Activated naive CD4-positive, alpha-beta T cell treated with anti-CD3 and anti-CD28 coated beads for 36 hours (primary cell): ENCODE measurements at regions of chr7 and their contacts with region 1.

Region 1: GRCh38 chr7:19708397-19709248 is at the start of gene POLR1F:
- DNase-seq: peak; percentile 95
- H3K4me3 Mint-ChIP-seq: peak within 1 kb of the TSS; percentile 87
- H3K27ac Mint-ChIP-seq: peak within 1 kb of the TSS; percentile 68
- H3K4me1 Mint-ChIP-seq: peaks cover 46% of the 10 kb centered on the region
- H3K27me3 Mint-ChIP-seq: no peaks in the 10 kb centered on the region
- total RNA-seq, gene POLR1F: 18.8 to 20.3 TPM

Region 2: DNA sequence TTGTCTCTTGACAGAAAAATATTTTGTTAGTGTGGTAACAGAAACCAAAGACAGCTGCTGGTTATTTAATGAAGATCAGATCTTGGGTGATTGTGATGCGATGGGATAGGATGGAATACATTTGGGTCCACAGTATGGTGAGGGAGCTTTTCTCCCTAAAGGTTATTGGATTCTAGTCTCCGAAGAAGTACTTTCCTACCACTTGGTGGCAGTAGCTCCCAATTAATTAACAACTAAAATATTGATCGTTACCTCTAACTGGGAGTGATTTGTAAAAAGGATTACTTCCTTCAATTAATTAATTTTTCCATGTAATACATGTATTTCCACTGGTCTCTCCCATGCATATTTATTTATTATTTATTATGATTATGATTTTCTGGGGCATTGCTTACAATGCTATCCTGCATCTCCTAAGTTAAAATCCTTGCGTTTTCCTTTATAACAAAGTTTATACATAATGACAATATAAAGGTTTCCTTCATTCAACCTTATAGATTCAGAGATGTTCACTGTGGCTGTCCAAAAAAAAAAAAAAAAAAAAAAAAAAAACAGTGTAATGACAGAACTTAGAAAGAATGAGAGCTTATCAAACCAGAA is 39.2 kb after region 1 on chr7:
- CTCF ChIA-PET with region 1: interaction called, 7 read pairs
- intact Hi-C with region 1: loop called (anchors 2 kb)
- DNase-seq: no peak
- H3K4me3 Mint-ChIP-seq: no peak overlapping the region
- H3K27ac Mint-ChIP-seq: no peak overlapping the region
- H3K4me1 Mint-ChIP-seq: no peaks in the 10 kb centered on the region
- H3K27me3 Mint-ChIP-seq: peaks cover 7% of the 10 kb centered on the region

Region 3: GRCh38 chr7:20030915-20031362 is 322.3 kb after region 1 on chr7:
- CTCF ChIA-PET with region 1: no interaction called
- intact Hi-C with region 1: no loop called
- DNase-seq: no peak
- H3K4me3 Mint-ChIP-seq: no peak overlapping the region
- H3K27ac Mint-ChIP-seq: no peak overlapping the region
- H3K4me1 Mint-ChIP-seq: no peaks in the 10 kb centered on the region
- H3K27me3 Mint-ChIP-seq: no peaks in the 10 kb centered on the region

Region 4: DNA sequence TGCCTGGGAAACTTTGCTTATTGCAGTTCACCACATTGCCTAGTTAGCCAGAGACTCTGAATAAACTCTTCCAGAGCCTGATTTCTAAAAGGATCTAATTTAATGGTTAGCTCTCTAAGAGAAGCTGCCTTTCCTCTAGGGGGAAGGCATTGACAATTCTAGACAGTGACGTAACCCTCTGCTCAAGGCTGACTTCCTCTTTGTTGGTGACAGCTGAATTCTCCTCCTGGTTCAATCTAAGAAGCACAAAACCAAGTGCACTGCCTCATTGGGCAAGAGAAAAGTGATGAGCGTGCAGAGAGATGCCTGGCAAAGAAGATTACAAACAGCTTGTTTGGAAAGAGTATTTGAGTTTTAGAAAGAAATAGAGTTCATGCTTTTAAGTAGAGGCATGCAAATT is 405.8 kb after region 1 on chr7:
- CTCF ChIA-PET with region 1: interaction called, 3 read pairs
- intact Hi-C with region 1: loop called (anchors 1 kb)
- DNase-seq: peak; percentile 8
- H3K4me3 Mint-ChIP-seq: no peak overlapping the region
- H3K27ac Mint-ChIP-seq: no peak overlapping the region
- H3K4me1 Mint-ChIP-seq: peaks cover 11% of the 10 kb centered on the region
- H3K27me3 Mint-ChIP-seq: no peaks in the 10 kb centered on the region

Region 5: DNA sequence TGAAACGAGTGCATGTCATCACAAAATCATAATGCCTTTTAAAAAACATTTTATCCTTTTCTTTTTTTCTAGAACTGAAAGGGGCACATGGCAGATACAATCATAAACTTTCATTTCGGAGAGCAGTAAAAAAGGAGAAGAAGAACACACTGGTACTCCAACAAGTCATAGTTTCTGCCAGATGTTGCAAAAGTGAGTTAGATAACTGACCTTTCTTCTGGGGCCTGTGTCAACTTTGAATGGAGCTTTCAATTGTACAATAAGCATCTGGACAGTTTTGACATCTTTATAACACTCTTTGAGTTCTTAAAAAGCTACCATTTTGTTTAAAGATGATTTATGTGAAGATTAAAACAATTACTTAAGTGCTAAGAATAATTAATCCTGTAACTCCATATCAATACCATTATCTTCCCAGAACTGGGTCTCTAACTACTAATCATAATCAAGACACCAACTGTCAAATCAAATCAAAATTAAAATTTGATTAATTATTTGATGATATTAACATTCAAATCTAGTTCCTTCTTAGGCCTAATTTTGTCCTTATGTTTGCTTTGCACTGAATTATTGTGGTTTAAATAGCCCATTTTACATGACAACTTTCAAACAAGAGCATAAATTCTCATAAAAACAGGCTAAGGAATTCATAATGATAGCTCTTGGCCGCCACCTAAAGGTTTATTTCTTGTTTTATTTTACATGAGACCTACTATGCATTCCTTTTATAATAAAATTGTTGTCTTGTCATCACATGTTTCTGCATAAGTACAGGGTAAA is 602.5 kb after region 1 on chr7:
- CTCF ChIA-PET with region 1: interaction called, 5 read pairs
- intact Hi-C with region 1: loop called (anchors 1 kb)
- DNase-seq: no peak
- H3K4me3 Mint-ChIP-seq: no peak overlapping the region
- H3K27ac Mint-ChIP-seq: no peak overlapping the region
- H3K4me1 Mint-ChIP-seq: no peaks in the 10 kb centered on the region
- H3K27me3 Mint-ChIP-seq: no peaks in the 10 kb centered on the region

Region 6: GRCh38 chr7:20598459-20599309 is 890.1 kb after region 1 on chr7:
- CTCF ChIA-PET with region 1: interaction called, 82 read pairs
- intact Hi-C with region 1: loop called (anchors 1 kb)
- DNase-seq: no peak
- H3K4me3 Mint-ChIP-seq: no peak overlapping the region
- H3K27ac Mint-ChIP-seq: no peak overlapping the region
- H3K4me1 Mint-ChIP-seq: peaks cover 3% of the 10 kb centered on the region
- H3K27me3 Mint-ChIP-seq: peaks cover 22% of the 10 kb centered on the region